ENCODE measurements at regions of chr5 and their contacts with region 1.

Region 1: DNA sequence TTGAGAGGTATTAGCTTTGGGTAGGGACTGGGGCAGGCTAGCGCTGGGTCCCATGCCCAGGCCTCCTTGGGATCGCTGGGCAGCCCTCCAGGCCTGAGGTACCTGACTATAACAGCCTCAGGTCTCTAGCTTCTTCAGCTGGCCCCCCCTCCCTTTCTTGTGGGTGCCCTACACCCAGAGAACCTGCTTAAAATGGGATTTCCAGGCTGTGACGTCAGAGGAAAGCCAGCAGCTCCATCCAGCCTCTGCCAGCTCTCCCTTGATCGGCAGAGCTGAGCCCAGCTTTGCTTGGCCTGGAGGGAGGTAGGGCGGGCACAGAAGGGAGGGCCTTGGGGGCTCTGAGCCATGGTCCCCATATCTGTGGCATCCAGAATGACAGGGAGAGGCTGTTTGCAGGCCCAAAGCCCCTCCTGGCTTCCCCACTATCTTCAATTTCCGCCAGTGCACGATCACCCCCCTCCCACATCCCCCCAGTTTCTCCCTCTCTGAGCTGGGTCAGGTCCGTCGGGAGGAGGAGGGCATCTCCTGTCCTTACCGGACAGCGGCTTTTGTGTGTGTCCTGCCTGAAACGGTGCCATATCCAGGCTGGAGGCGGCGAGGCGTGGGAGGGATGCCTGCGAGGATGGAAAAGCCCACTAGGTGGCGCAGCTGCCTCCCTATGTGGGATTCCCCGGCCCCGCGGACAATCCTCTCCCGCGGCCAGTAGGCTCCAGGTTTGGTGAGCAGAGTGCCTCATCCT is 10.8 kb downstream of the REEP2 start:
- DNase-seq: peak; percentile 96
- ATAC-seq: peak; percentile 95

Region 2: DNA sequence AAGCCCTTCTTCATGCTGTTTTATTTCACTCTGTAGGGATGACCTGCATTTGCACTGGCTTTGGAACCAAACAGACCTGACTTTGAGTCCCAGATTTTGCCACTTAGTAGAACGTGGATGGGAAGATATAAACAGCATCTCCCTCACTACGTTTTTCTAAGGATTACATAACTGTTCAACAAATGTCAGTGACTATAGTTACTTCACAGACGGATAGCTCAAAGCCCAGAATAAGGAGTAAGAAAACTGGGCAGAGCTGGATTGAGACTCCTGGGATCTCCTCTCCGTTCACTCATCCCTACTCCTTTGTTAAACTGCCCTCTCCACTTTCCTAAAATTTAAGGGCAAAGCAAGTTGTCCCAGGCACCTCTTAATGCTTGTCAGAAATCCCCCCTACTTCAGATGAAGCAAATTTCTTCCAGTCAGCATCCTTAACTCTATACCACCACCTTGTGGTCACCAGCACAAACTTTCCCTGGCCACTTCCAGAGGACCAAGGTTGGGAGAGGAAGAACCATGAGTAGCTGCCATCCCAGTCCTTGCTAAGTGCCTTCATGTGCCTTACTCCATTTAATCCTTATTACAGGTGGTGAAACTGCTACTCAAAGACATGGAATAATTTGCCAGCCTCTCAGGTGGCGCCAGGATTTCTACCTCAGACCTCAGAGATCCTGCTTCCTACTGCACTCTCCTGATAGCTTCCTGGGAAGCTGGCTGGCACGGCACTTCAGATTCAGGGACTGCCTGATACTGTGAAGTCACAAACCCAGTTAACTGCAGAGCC is 54.0 kb after region 1 on chr5:
- intact Hi-C with region 1: loop called (anchors 5 kb)
- DNase-seq: no peak
- ATAC-seq: peak; percentile 89

Measured in sciatic nerve (tissue), 2 donors.